ENCODE measurements at regions of chr18 and their contacts with region 1.

Region 1: DNA sequence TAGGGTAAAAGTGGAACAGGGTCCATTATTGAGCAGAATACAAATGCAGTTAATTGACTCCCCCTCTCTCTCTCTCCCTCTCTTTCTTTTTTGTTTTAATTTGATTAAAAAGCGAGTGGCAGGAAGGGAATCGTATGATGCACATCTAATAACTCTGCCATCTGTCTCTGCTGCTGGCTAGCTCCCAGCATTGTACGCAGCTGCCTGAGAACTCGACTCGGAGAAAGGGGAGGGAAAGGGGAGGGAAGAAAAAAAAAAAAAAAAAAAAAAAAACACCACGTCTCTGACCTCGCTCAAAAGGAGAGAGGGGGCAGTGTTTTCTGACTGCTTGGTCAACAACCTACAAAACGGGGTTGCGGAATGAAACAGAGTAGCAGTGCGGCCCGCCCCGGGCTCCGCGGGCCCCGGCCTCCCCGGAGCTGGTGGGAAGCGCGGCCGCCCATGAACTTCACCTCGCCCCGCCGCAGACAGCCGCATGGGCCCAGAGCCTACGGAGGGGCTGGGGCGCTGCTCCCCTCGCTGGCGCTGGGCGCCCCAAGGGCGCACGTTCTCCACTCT is 265.7 kb downstream of the TCF4 start:
- DNase-seq: peak; percentile 74
- ATAC-seq: peak; percentile 66
- H3K4me3 ChIP-seq: peak overlapping the region; percentile 91
- H3K27ac ChIP-seq: peak overlapping the region; percentile 84
- H3K4me1 ChIP-seq: no peaks in the 10 kb centered on the region
- H3K27me3 ChIP-seq: no peaks in the 10 kb centered on the region
- CTCF ChIP-seq: no peak
- EP300 ChIP-seq: 0 out of 4 replicates have a peak, but pooled peaks of 1 of the 2 experiments have one; percentile 13
- POLR2A ChIP-seq: peak; percentile 80
- RAD21 ChIP-seq: no peak

Region 2: DNA sequence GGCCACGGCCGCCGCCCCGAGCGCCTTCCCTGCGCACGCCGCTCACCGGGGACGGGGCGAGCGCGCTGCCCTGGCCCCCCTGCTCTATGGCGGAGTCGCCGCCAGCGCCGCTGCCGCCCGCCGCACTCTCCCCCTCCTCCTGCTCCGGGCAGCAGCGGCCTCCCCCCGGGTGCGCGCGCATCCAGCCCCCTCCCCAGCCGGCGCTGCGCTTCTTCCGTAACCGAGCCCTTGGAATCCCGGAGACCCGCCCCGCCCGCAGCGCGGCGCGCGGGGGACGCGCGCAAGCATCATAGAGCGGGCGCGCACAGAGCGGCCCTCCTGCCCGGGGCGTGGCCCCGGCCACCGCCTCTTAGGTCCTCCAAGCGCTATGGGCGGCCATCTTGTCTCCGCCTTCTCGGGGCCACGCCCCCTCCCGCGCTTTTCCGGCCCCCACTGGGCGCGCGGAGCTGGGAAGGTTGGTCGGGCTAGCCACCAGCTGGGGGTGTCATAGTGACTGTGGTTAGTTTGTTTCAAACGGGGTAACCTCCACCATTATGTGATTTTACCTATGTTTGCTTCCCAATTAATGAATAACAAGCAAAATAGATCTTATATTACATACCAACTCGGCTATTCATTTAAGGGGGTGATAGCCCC is 1097.8 kb before region 1 on chr18 and contains the start of gene MBD2:
- CTCF ChIA-PET with region 1: no interaction called
- POLR2A ChIA-PET with region 1: no interaction called
- RAD21 ChIA-PET with region 1: interaction called, 3 read pairs
- SMC1A ChIA-PET with region 1: interaction called, 3 read pairs
- in situ Hi-C with region 1: no loop called
- intact Hi-C with region 1: loop called (anchors 10 kb)
- DNase-seq: peak; percentile 76
- ATAC-seq: peak; percentile 84
- H3K4me3 ChIP-seq: peak within 1 kb of the TSS; percentile 77
- H3K27ac ChIP-seq: peak within 1 kb of the TSS; percentile 88
- H3K4me1 ChIP-seq: no peaks in the 10 kb centered on the region
- H3K27me3 ChIP-seq: no peaks in the 10 kb centered on the region
- CTCF ChIP-seq: peak; percentile 10 to 39 (median 23); a peak in 1 of 6 replicates
- EP300 ChIP-seq: no peak
- POLR2A ChIP-seq: peak; percentile 72
- RAD21 ChIP-seq: peak; percentile 49; the same call in 1 of the 2 replicates
- polyA plus RNA-seq, gene MBD2: 27.0 to 53.5 TPM

Region 3: GRCh38 chr18:55243857-55244256 is 78.4 kb before region 1 on chr18:
- CTCF ChIA-PET with region 1: interaction called, 6 read pairs
- POLR2A ChIA-PET with region 1: interaction called, 8 read pairs
- RAD21 ChIA-PET with region 1: interaction called, 69 read pairs
- SMC1A ChIA-PET with region 1: interaction called, 50 read pairs
- in situ Hi-C with region 1: loop called (anchors 5 kb)
- intact Hi-C with region 1: loop called (anchors 1 kb)
- DNase-seq: no peak
- ATAC-seq: no peak
- H3K4me3 ChIP-seq: no peak overlapping the region
- H3K27ac ChIP-seq: no peak overlapping the region
- H3K4me1 ChIP-seq: peaks cover 44% of the 10 kb centered on the region
- H3K27me3 ChIP-seq: no peaks in the 10 kb centered on the region
- CTCF ChIP-seq: no peak
- EP300 ChIP-seq: no peak
- POLR2A ChIP-seq: no peak
- RAD21 ChIP-seq: no peak

Region 4: DNA sequence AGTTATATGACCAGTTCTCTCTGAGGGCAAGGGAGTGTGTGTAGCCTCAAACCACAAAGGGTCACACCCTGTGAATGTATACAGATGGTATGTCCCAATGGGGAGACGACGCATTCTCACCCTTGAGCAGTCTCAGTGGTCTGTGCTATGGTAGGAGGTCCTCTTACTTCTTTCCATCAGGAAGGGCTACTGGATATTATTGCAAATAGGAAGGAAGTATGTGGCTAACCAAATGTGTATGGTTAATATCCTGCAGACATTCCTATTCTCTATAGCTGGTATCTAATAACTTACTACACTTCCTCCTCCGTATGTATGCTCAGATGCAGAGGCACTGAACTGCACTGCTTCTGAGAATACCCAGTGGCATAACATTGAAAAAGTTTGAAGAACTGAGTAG is 56.3 kb before region 1 on chr18:
- CTCF ChIA-PET with region 1: interaction called, 24 read pairs
- POLR2A ChIA-PET with region 1: interaction called, 52 read pairs
- RAD21 ChIA-PET with region 1: interaction called, 83 read pairs
- SMC1A ChIA-PET with region 1: interaction called, 154 read pairs
- in situ Hi-C with region 1: no loop called
- intact Hi-C with region 1: loop called (anchors 1 kb)
- DNase-seq: peak; percentile 59
- ATAC-seq: peak; percentile 68
- H3K4me3 ChIP-seq: no peak overlapping the region
- H3K27ac ChIP-seq: peak overlapping the region; percentile 93
- H3K4me1 ChIP-seq: peaks cover 61% of the 10 kb centered on the region
- H3K27me3 ChIP-seq: no peaks in the 10 kb centered on the region
- CTCF ChIP-seq: no peak
- EP300 ChIP-seq: no peak
- POLR2A ChIP-seq: no peak
- RAD21 ChIP-seq: no peak

Region 5: DNA sequence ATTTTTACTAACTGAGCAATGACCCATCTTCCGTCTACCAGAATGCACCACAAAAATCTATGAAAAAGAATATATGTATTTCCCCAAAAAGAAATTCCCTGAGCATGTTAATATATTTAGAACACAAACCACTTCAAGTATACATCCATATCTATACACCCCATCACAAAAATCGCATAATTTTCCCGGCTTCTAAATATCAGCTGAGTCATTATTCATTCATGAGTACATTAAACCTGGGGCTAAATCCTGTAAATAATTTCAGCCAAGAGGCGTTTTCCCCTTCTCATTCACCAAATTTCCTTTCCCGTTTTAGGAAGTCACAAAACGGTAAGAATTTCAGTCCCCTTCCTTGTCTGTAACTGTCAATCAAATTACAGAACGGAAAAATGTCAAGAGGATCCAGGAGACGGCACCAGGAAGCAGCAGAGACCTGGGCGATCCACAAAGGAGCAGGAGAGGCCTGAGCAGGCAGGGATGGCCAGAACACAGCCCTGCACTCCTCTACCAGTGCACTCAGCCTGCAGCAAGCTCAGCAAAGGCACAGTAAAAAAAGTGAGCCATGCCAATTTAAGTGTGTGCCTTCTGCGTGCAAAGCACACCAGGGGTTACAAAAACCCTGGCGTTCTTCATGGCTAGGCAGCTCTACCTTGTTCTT is 35.0 kb before region 1 on chr18:
- CTCF ChIA-PET with region 1: interaction called, 5 read pairs
- POLR2A ChIA-PET with region 1: interaction called, 7 read pairs
- RAD21 ChIA-PET with region 1: interaction called, 14 read pairs
- SMC1A ChIA-PET with region 1: interaction called, 19 read pairs
- in situ Hi-C with region 1: no loop called
- intact Hi-C with region 1: loop called (anchors 5 kb)
- DNase-seq: no peak
- ATAC-seq: no peak
- H3K4me3 ChIP-seq: no peak overlapping the region
- H3K27ac ChIP-seq: no peak overlapping the region
- H3K4me1 ChIP-seq: 0 out of 2 replicates have a peak, but pooled peaks cover 3% of the 10 kb centered on the region
- H3K27me3 ChIP-seq: no peaks in the 10 kb centered on the region
- CTCF ChIP-seq: no peak
- EP300 ChIP-seq: no peak
- POLR2A ChIP-seq: no peak
- RAD21 ChIP-seq: no peak

Region 6: DNA sequence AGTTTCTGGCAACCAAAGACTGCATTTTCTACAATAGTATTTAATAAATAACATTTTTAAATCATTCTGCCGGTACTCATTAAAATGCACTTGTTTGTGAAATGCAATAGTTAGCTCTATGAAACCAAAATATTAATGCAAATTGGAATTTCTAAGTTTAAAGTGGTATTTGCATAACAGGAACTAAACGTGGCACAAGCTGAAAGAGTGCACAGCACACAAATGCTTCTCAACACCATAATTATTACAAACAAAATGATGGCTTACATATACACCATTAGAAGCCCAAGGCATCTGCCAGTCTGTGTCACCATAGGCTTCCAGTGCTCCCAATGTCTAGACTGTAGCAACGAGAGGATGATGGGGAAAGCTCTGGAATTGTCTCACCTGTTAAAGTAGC is 14.8 kb before region 1 on chr18:
- CTCF ChIA-PET with region 1: interaction called, 44 read pairs
- POLR2A ChIA-PET with region 1: interaction called, 26 read pairs
- RAD21 ChIA-PET with region 1: interaction called, 45 read pairs
- SMC1A ChIA-PET with region 1: interaction called, 157 read pairs
- in situ Hi-C with region 1: no loop called
- intact Hi-C with region 1: no loop called
- DNase-seq: no peak
- ATAC-seq: peak; percentile 45
- H3K4me3 ChIP-seq: peak overlapping the region; percentile 29; the same call in 1 of the 2 replicates
- H3K27ac ChIP-seq: peak overlapping the region; percentile 43
- H3K4me1 ChIP-seq: peaks cover 13% of the 10 kb centered on the region; the same call in 1 of the 2 replicates
- H3K27me3 ChIP-seq: no peaks in the 10 kb centered on the region
- CTCF ChIP-seq: no peak
- EP300 ChIP-seq: no peak
- POLR2A ChIP-seq: no peak
- RAD21 ChIP-seq: no peak

Region 7: GRCh38 chr18:55369346-55369745 is 47.1 kb after region 1 on chr18:
- CTCF ChIA-PET with region 1: no interaction called
- POLR2A ChIA-PET with region 1: no interaction called
- RAD21 ChIA-PET with region 1: no interaction called
- SMC1A ChIA-PET with region 1: no interaction called
- in situ Hi-C with region 1: no loop called
- intact Hi-C with region 1: no loop called
- DNase-seq: no peak
- ATAC-seq: no peak
- H3K4me3 ChIP-seq: no peak overlapping the region
- H3K27ac ChIP-seq: no peak overlapping the region
- H3K4me1 ChIP-seq: no peaks in the 10 kb centered on the region
- H3K27me3 ChIP-seq: no peaks in the 10 kb centered on the region
- CTCF ChIP-seq: no peak
- EP300 ChIP-seq: no peak
- POLR2A ChIP-seq: no peak
- RAD21 ChIP-seq: no peak

Region 8: DNA sequence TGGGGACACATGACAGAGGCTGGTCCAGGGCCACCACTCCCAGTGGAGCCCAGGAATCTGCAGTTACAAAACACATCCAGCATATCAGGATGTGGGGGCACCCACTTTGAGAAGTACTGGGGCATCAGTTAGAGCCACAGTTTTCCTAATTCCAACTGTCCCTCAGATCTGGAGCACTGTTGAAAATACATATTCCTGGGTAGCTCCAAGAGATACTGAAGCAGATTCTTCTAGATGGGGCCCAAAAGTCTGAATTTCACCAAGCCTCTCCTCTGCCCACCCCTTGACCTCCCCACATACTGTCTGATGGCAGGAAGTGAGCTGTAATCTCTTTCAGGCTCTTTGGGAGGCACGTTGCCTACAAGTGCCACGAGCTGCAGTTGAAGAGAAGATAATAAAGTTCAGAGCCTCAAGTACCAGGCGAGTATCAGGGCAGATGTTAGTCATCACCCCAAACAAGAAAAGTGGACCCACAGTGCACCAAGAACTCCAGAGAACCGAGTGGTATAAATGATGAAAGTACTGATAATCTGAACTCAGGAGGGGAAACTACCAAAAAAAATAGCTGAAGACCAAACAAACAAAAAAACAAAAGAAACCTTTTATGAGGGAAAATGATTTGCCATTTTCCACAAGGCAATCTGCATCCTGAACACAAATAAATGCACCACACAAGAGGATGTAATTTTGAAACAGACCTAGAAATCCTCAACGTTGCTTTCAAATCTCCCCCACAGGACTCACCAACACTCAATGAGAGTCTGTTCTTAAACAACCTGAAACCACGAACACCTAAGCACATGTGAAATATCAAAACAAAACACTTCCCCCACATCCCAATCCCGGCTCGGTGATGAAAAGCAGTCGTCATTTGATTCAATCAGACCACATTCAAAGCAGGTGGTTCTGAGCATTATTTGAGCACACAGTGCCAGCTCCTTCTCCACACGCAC is 167.1 kb after region 1 on chr18:
- CTCF ChIA-PET with region 1: no interaction called
- POLR2A ChIA-PET with region 1: no interaction called
- RAD21 ChIA-PET with region 1: no interaction called
- SMC1A ChIA-PET with region 1: no interaction called
- in situ Hi-C with region 1: no loop called
- intact Hi-C with region 1: no loop called
- DNase-seq: peak; percentile 8
- ATAC-seq: peak; percentile 76
- H3K4me3 ChIP-seq: no peak overlapping the region
- H3K27ac ChIP-seq: no peak overlapping the region
- H3K4me1 ChIP-seq: peaks cover 10% of the 10 kb centered on the region
- H3K27me3 ChIP-seq: no peaks in the 10 kb centered on the region
- CTCF ChIP-seq: no peak
- EP300 ChIP-seq: peak in 1 of 2 experiments; percentile 53; a peak in 1 of 4 replicates
- POLR2A ChIP-seq: no peak
- RAD21 ChIP-seq: no peak

Region 9: DNA sequence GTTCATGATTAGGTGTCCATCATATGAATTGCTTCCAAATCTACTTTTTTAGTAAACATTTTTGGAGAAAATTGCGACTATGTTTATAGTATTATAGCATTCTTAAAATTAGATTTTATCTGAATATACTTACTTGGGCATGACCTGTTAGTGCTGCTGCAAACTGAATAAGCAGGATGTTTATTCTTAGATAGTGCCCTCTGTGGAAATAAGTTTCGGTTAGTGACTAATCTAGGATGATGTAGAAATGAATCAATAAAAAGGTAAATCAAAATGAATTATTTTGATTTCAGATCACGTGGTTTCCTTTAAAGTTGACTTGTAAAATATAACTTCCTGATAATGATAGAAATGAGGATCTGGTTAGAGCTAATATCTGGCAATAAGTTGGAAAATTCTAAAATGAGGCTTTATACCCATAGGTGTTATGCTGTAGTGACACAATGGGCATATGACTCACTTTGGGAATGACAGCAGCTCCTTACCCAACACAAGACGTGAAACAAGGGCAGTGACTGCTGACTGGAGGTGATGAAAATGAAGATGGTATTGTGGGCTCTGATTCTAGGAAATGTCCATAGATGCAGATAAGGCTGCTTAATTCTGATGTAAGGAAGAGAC is 431.5 kb after region 1 on chr18:
- CTCF ChIA-PET with region 1: no interaction called
- POLR2A ChIA-PET with region 1: no interaction called
- RAD21 ChIA-PET with region 1: no interaction called
- SMC1A ChIA-PET with region 1: no interaction called
- in situ Hi-C with region 1: no loop called
- intact Hi-C with region 1: no loop called
- DNase-seq: no peak
- ATAC-seq: no peak
- H3K4me3 ChIP-seq: no peak overlapping the region
- H3K27ac ChIP-seq: no peak overlapping the region
- H3K4me1 ChIP-seq: no peaks in the 10 kb centered on the region
- H3K27me3 ChIP-seq: no peaks in the 10 kb centered on the region; a peak in 1 of 4 replicates
- CTCF ChIP-seq: no peak
- EP300 ChIP-seq: no peak
- POLR2A ChIP-seq: no peak
- RAD21 ChIP-seq: no peak